Left cardiac atrium (tissue), 4 donors: ENCODE measurements at regions of chr6 and their contacts with region 1.

Region 1: GRCh38 chr6:36027501-36028087 is at the start of gene MAPK14:
- DNase-seq: peak; percentile 99
- ATAC-seq: peak; percentile 92 to 95
- total RNA-seq, gene MAPK14: 36.1 to 38.4 TPM

Region 2: GRCh38 chr6:36094753-36095496 is 67.3 kb after region 1 on chr6:
- intact Hi-C with region 1: loop called (anchors 1 to 2 kb)
- DNase-seq: peak; percentile 85
- ATAC-seq: peak; percentile 90 to 91